Activated naive CD8-positive, alpha-beta T cell treated with anti-CD3 and anti-CD28 coated beads, Interleukin-2, amount 10 ng/mL, durations not matched to agents 7 days and 5 days (primary cell): ENCODE measurements at regions of chr11 and their contacts with region 1.

Region 1: DNA sequence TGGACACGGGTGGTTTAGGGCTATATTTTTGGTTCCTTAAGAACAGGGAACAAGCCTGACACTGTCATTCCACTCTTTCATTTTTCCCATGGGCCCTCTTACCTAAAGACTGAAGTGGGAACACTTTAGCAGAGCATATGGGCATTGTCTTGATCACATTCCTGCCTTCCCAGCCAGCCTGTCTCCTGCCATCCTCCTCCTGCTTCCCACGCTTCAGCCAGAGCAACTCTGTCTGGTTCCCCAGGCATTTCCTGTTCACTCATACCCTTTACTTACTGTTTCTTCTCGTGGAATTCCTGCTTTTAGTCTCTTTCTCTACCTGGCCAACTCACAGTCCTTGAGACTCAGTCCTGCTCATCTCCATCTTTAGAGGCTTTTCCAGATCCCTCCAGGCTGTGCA is 22.8 kb downstream of the MRPL16 start:
- DNase-seq: no peak
- ATAC-seq: no peak
- H3K4me3 Mint-ChIP-seq: no peak overlapping the region
- H3K27ac Mint-ChIP-seq: peak overlapping the region; percentile 7
- H3K4me1 Mint-ChIP-seq: peaks cover 45% of the 10 kb centered on the region
- H3K27me3 Mint-ChIP-seq: no peaks in the 10 kb centered on the region

Region 2: DNA sequence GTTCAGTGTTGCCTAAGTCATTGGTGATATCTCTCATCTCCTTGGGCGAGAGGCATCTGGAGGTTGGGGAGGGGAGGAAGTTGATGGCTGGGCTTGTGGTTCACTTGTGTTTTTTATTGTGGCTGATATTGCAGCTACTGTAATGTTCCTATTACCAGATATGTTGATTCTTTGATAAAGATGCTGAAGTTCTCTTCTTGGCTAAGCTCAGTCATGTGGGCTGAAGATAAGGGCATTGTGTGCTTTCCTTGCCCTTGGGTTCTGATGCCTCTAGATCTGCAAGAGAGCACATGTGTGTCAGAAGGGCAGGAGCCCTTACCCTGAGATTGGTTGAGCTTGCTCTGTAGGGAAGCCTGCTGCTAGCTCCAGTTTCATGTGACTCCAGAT is 20.6 kb before region 1 on chr11:
- POLR2A ChIA-PET with region 1: interaction called, 38 read pairs
- DNase-seq: peak; percentile 55
- ATAC-seq: peak; percentile 81
- H3K4me3 Mint-ChIP-seq: no peak overlapping the region
- H3K27ac Mint-ChIP-seq: no peak overlapping the region
- H3K4me1 Mint-ChIP-seq: peaks cover 30% of the 10 kb centered on the region
- H3K27me3 Mint-ChIP-seq: no peaks in the 10 kb centered on the region

Region 3: GRCh38 chr11:59944720-59945119 is 156.9 kb after region 1 on chr11:
- POLR2A ChIA-PET with region 1: no interaction called
- DNase-seq: no peak
- ATAC-seq: no peak
- H3K4me3 Mint-ChIP-seq: no peak overlapping the region
- H3K27ac Mint-ChIP-seq: no peak overlapping the region
- H3K4me1 Mint-ChIP-seq: no peaks in the 10 kb centered on the region
- H3K27me3 Mint-ChIP-seq: peaks cover 12% of the 10 kb centered on the region